ENCODE measurements at regions of chr18 and their contacts with region 1.

Region 1: GRCh38 chr18:33596178-33596854 is 18.3 kb downstream of the ASXL3 start:
- DNase-seq: no peak
- H3K4me3 ChIP-seq: no peak overlapping the region
- H3K27ac ChIP-seq: no peak overlapping the region
- H3K4me1 ChIP-seq: peaks cover 0 to 4% of the 10 kb centered on the region in 2 donors
- H3K27me3 ChIP-seq: no peaks in the 10 kb centered on the region
- CTCF ChIP-seq: no peak

Region 2: GRCh38 chr18:33577685-33578517 is 18.4 kb before region 1 on chr18 and contains the start of gene ASXL3:
- intact Hi-C with region 1: loop called (anchors 2 kb)
- DNase-seq: peak in 1 of 2 donors; percentile 76
- H3K4me3 ChIP-seq: peak within 1 kb of the TSS; percentile 93 to 94
- H3K27ac ChIP-seq: peak within 1 kb of the TSS; percentile 88 to 92
- H3K4me1 ChIP-seq: peaks cover 0 to 6% of the 10 kb centered on the region in 2 donors
- H3K27me3 ChIP-seq: no peaks in the 10 kb centered on the region
- CTCF ChIP-seq: no peak
- total RNA-seq, gene ASXL3: 6.6 TPM